PC-3 (cell line): ENCODE measurements at regions of chr12 and their contacts with region 1.

Region 1: DNA sequence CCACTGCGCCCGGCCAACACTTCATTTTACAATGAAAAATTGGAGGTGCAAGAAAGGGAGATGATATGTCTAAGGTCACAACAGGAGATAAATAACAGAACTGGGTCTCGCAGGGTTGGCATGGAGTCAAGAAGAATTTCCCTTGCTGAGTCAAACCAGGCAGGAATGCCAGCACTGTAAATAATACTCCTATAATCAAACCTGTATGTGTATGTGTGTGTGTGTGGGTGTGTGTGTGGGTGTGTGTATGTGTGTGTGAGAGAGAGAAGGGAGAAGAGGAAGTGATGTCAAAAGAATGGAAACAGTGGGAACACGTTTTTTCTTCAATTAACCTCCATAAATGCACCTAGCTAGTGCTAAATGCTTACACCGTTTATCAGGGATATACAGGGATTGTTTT is 70.4 kb downstream of the TMEM116 start:
- DNase-seq: peak; percentile 94
- ATAC-seq: peak; percentile 88
- H3K4me3 ChIP-seq: no peak overlapping the region
- H3K27ac ChIP-seq: no peak overlapping the region
- H3K4me1 ChIP-seq: peaks cover 9% of the 10 kb centered on the region; the same call in 1 of the 2 replicates
- H3K27me3 ChIP-seq: no peaks in the 10 kb centered on the region
- CTCF ChIP-seq: no peak

Region 2: GRCh38 chr12:111812881-111813741 is 129.4 kb before region 1 on chr12:
- CTCF ChIA-PET with region 1: no interaction called
- POLR2A ChIA-PET with region 1: no interaction called
- intact Hi-C with region 1: no loop called
- DNase-seq: peak; percentile 95
- ATAC-seq: peak; percentile 99
- H3K4me3 ChIP-seq: no peak overlapping the region
- H3K27ac ChIP-seq: no peak overlapping the region
- H3K4me1 ChIP-seq: no peaks in the 10 kb centered on the region
- H3K27me3 ChIP-seq: no peaks in the 10 kb centered on the region
- CTCF ChIP-seq: peak; percentile 94

Region 3: DNA sequence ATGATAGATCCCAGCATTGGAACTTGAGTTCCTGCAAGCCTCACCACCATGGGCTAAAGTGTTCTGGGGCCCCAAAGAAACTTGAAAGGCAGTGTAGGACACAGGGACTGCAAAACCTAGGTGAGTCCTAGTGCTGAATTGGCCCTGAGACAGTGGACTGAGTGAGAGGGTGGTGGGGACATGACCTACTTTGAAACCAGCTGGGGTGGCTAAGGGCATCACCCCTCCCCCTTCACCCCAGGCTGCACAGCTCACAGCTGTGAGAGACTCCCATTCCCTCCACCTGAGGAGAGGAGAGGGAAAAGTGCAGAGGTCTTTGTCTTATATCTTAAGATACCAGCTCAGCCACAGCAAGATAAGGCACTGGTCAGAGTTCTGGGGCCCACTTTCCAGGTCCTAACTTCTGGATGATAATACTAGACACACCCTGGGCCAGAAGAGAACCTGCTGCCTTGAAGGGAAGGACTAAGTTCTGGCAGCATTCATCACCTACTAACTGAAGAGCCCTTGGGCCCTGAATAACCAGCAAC is 38.0 kb before region 1 on chr12:
- CTCF ChIA-PET with region 1: no interaction called
- POLR2A ChIA-PET with region 1: no interaction called
- intact Hi-C with region 1: loop called (anchors 1 kb)
- DNase-seq: no peak
- ATAC-seq: no peak
- H3K4me3 ChIP-seq: no peak overlapping the region
- H3K27ac ChIP-seq: no peak overlapping the region
- H3K4me1 ChIP-seq: no peaks in the 10 kb centered on the region
- H3K27me3 ChIP-seq: no peaks in the 10 kb centered on the region
- CTCF ChIP-seq: no peak

Region 4: DNA sequence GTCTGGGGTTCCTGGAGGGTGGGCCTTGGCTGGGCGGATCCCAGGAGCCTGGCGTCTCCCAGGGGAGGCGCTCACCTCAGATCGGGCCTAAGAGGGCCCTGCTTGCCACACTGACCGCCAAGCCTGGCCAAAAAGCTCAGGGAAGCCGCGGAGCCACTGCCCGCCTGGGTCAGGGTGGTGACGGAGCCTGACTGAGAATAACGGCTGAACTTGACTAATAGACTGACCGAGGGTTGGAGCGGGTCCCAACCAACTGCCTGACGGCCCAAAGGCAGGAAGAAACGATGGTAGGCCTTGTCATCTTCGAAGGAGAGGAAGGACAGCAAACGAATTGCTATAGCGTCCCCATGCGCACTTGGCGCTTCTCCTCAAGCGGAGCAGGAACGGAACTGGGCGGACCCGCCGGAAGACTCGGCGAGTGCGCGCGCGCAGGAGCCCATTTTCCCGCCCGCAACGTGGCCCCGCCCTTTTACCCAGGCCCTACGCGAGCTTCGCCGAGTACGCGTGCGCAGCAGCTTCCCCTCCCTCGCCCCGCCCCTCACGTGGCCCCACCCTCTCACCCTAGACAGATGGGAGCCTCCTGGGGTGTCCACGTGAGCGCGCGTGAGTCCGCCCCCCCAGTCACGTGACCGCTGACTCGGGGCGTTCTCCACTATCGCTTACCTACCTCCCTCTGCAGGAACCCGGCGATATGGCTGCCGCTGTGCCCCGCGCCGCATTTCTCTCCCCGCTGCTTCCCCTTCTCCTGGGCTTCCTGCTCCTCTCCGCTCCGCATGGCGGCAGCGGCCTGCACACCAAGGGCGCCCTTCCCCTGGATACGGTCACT is 70.4 kb after region 1 on chr12 and contains the starts of genes ERP29 and TMEM116:
- CTCF ChIA-PET with region 1: interaction called, 15 read pairs
- POLR2A ChIA-PET with region 1: interaction called, 11 read pairs
- intact Hi-C with region 1: loop called (anchors 1 kb)
- DNase-seq: peak; percentile 99
- ATAC-seq: peak; percentile 79
- H3K4me3 ChIP-seq: peak within 1 kb of the TSS; percentile 92
- H3K27ac ChIP-seq: peak within 1 kb of the TSS; percentile 86
- H3K4me1 ChIP-seq: peaks cover 36% of the 10 kb centered on the region
- H3K27me3 ChIP-seq: no peaks in the 10 kb centered on the region
- CTCF ChIP-seq: peak; percentile 48
- total RNA-seq, gene ERP29: 90.2 and 97.2 TPM in 2 replicates
- total RNA-seq, gene TMEM116: 4.4 and 5.6 TPM in 2 replicates

Region 5: GRCh38 chr12:112087055-112087850 is 144.7 kb after region 1 on chr12:
- CTCF ChIA-PET with region 1: no interaction called
- POLR2A ChIA-PET with region 1: no interaction called
- intact Hi-C with region 1: loop called (anchors 1 kb)
- DNase-seq: no peak
- ATAC-seq: peak; percentile 27
- H3K4me3 ChIP-seq: no peak overlapping the region
- H3K27ac ChIP-seq: no peak overlapping the region
- H3K4me1 ChIP-seq: peaks cover 6% of the 10 kb centered on the region
- H3K27me3 ChIP-seq: no peaks in the 10 kb centered on the region
- CTCF ChIP-seq: peak; percentile 57